Breast epithelium (tissue), 4 donors: ENCODE measurements at regions of chr13 and their contacts with region 1.

Region 1: DNA sequence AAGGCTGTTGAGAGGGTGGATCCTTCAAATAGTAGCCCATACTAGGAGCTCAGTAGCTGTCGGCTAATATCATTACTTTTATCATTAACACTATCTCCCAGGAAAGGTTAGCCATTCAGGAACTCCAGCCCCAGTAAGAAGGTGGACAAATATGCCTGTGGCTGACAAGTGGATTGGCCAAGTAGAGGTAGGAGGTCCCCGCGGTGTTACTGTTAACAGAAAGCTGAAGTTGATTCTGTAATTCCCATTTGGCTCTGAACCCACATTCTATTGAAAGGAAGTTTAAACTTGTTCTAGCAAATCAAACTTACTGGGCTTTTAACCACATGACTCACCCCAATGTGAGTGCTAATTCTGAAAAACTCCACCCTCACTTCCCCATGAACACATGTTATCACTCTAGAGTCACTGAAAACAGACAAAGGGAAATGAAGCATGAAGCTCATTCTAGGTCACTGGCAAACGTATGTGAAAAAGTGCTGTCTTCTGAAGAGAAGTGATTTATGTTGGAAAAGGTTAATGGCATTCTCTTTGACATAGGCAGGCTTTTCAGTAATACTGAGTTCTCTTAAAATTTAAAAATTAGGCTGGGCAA is 273.5 kb downstream of the FGF14 start:
- DNase-seq: no peak
- H3K4me3 ChIP-seq: no peak overlapping the region
- H3K27ac ChIP-seq: no peak overlapping the region
- H3K4me1 ChIP-seq: no peaks in the 10 kb centered on the region
- H3K27me3 ChIP-seq: no peaks in the 10 kb centered on the region
- CTCF ChIP-seq: no peak
- POLR2A ChIP-seq: no peak

Region 2: GRCh38 chr13:102097708-102098107 is 30.6 kb before region 1 on chr13:
- intact Hi-C with region 1: no loop called
- DNase-seq: no peak
- H3K4me3 ChIP-seq: no peak overlapping the region
- H3K27ac ChIP-seq: no peak overlapping the region
- H3K4me1 ChIP-seq: no peaks in the 10 kb centered on the region
- H3K27me3 ChIP-seq: no peaks in the 10 kb centered on the region
- CTCF ChIP-seq: no peak
- POLR2A ChIP-seq: no peak

Region 3: GRCh38 chr13:102227741-102228140 is 99.4 kb after region 1 on chr13:
- intact Hi-C with region 1: loop called (anchors 5 kb)
- DNase-seq: no peak
- H3K4me3 ChIP-seq: no peak overlapping the region
- H3K27ac ChIP-seq: no peak overlapping the region
- H3K4me1 ChIP-seq: no peaks in the 10 kb centered on the region
- H3K27me3 ChIP-seq: no peaks in the 10 kb centered on the region
- CTCF ChIP-seq: no peak
- POLR2A ChIP-seq: no peak

Region 4: GRCh38 chr13:102260247-102260646 is 131.9 kb after region 1 on chr13:
- intact Hi-C with region 1: no loop called
- DNase-seq: no peak
- H3K4me3 ChIP-seq: no peak overlapping the region
- H3K27ac ChIP-seq: no peak overlapping the region
- H3K4me1 ChIP-seq: no peaks in the 10 kb centered on the region
- H3K27me3 ChIP-seq: no peaks in the 10 kb centered on the region
- CTCF ChIP-seq: no peak
- POLR2A ChIP-seq: no peak